PC-9 (cell line): ENCODE measurements at regions of chr1 and their contacts with region 1.

Region 1: GRCh38 chr1:54973205-54973921 is 7.1 kb upstream of the TMEM61 start:
- DNase-seq: no peak
- H3K4me3 ChIP-seq: no peak overlapping the region
- H3K27ac ChIP-seq: no peak overlapping the region
- H3K4me1 ChIP-seq: peaks cover 72% of the 10 kb centered on the region
- H3K27me3 ChIP-seq: no peaks in the 10 kb centered on the region
- CTCF ChIP-seq: peak; percentile 56; the same call in 1 of the 2 replicates

Region 2: DNA sequence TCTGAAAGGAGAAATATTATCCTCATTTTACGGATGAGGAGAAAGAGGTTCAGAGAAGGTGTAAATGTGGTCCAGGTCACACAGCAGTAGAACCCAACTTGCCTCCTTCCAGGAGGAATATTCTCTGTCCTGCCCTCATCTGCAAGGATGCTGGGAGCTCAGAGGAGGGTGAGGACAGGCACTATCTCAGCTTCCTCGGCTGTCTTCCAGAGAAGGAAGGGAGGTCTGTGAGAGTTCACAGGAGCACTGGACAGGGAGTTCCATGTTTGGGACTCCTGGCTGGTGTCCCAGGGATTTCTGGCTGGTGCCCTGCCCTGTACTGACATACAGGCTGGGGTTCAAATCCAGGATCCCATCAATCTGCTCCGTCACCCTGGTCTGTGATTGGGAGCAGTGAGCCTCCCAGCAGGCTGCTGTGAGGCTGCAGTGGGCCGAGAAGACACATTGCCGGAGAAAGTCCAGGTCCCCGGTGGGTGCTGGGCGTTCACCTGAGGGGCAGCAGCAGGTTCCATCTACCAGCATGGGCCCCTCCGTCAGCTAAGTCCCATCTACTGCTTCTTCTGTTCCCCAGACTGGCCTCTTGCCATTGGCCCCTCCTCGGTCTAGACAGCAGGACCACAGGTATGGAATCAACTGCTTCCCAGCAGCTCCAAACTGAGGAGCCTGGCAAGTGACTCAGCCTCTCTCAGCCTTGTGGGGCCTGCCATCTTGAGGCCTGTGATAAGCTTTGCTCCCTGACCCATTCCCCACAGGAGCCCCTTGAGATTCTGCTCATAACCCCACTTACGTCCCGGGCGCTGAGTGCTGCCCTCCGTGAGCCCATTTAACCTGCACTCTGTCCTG is 16.8 kb after region 1 on chr1:
- CTCF ChIA-PET with region 1: no interaction called
- POLR2A ChIA-PET with region 1: interaction called, 4 read pairs
- intact Hi-C with region 1: loop called (anchors 2 kb)
- DNase-seq: no peak
- H3K4me3 ChIP-seq: no peak overlapping the region
- H3K27ac ChIP-seq: no peak overlapping the region
- H3K4me1 ChIP-seq: peaks cover 30% of the 10 kb centered on the region
- H3K27me3 ChIP-seq: no peaks in the 10 kb centered on the region
- CTCF ChIP-seq: no peak

Region 3: DNA sequence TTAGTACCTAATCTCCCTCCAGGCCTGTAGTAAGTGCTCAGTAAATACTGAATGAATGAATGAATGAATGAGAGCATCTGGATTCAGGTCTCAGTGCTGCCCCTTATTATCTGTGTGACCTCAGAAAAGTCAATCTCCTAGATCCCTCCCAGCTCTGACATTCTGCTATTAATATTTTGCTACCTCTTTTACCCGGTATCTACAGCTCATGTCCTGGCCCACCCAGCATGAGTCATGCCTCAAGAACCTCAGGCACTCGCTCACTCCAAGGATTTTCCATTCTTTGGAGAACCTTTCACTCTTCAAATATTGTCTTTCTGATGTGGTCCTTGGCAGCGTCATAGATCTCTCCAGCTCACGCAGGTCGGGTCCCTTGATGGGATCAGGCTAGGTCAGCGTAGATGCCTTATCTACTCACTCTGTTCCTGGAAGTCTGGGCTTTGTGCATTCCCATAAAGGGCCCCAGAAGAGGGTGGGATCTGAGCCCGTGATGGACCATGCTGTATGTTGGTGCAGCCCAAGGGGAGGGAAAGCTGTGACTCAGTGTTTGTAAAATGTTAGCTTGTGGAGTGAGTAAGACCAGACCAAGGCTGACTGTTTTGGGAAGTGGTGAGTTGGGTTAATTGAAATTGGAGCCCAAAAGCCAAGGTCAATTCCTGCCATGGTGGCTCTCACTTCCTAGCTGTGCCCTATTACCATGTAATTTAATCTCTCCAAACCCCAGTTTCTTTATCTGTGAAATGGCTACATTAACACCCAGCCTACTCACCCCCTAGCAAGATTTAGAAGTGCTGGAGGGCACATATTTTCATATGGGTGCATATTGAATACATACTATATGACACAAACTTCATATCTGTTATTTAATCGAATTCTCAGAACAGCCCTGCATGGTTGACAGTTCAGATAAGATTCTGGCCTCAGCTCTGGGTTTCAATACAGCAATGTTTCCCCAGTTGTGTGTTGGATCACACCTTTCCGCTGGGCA is 455.9 kb after region 1 on chr1:
- CTCF ChIA-PET with region 1: no interaction called
- POLR2A ChIA-PET with region 1: no interaction called
- intact Hi-C with region 1: no loop called
- DNase-seq: peak; percentile 95 to 100
- H3K4me3 ChIP-seq: no peak overlapping the region
- H3K27ac ChIP-seq: peak overlapping the region; percentile 77
- H3K4me1 ChIP-seq: peaks cover 47% of the 10 kb centered on the region
- H3K27me3 ChIP-seq: no peaks in the 10 kb centered on the region
- CTCF ChIP-seq: no peak